ENCODE measurements at regions of chr3 and their contacts with region 1.

Region 1: DNA sequence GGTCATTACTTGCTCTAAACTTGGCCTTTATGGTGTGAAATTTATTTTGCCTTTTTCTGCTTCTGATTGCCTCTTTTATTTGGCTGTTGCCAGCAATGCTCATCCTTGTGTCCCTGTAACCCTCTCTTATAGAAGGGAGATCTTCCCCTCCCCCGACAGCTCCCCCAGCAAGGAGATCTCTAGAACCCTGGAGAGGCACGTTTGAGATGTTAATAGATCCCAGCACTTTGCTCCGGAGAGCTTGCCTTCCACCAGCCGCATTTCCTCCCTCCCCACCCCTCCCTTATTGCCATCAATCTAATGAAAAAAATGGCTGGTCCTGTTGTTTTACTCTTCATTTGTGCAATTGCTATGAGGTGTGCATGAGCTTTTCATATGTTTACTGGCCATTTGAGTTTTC is 18.2 kb downstream of the TRIM71 start:
- DNase-seq: no peak
- ATAC-seq: no peak
- H3K4me3 ChIP-seq: no peak overlapping the region
- H3K4me3 Mint-ChIP-seq: no peak overlapping the region
- H3K27ac ChIP-seq: no peak overlapping the region
- H3K27ac Mint-ChIP-seq: no peak overlapping the region
- H3K4me1 ChIP-seq: no peaks in the 10 kb centered on the region
- H3K4me1 Mint-ChIP-seq: no peaks in the 10 kb centered on the region
- H3K27me3 ChIP-seq: peaks cover 0 to 15% of the 10 kb centered on the region in 2 experiments
- H3K27me3 Mint-ChIP-seq: peaks cover 18 to 30% of the 10 kb centered on the region in 2 donors

Region 2: GRCh38 chr3:32484436-32484835 is 351.5 kb before region 1 on chr3:
- CTCF ChIA-PET with region 1: no interaction called
- POLR2A ChIA-PET with region 1: no interaction called
- DNase-seq: no peak
- ATAC-seq: no peak
- H3K4me3 ChIP-seq: no peak overlapping the region
- H3K4me3 Mint-ChIP-seq: peak overlapping the region in 1 of 3 donors; percentile 10
- H3K27ac ChIP-seq: no peak overlapping the region
- H3K27ac Mint-ChIP-seq: peak overlapping the region; percentile 11 to 69
- H3K4me1 ChIP-seq: peaks cover 0 to 6% of the 10 kb centered on the region in 2 experiments
- H3K4me1 Mint-ChIP-seq: peaks cover 20 to 37% (median 34%) of the 10 kb centered on the region in 3 donors
- H3K27me3 ChIP-seq: no peaks in the 10 kb centered on the region
- H3K27me3 Mint-ChIP-seq: no peaks in the 10 kb centered on the region

Region 3: DNA sequence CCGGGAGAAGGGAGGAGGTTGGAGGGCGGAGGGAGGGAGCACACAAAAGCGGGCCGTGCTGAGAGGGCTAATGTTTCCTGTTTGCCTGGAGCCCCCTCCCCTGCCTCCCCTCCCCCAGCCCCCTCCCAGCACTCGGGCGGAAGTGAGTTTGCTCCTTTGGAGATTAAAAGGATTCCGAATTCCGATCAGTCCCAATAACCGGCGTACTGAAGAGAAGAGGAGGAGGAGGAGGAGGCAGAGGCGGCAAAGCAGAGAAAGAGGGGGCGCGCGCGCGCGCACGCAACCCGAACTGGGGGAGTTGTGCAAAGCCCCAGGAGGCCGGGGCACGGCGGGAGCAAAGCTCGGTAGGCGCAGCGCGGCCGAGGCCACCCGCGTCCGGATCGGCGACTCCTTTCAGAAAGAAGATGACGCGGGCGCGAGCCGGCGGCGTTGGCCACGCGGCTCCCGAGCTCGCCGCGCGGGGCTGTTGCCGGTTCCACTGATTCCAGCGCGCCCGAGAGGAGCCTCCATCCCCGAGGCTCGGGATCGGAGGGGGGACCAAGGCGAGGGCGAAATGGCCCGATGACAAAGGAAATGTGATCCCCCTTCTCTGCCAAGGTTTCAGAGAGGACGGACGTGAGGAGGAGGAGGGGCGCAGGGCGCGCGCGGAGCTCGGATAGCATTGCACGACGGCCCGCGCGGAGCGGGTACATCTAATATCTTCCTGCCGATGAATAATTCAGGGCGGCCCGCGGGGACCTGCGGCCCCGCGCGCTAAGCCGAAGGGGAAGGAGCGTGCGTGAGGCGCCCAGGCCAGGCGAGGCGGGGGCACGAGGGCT is 19.3 kb before region 1 on chr3:
- CTCF ChIA-PET with region 1: no interaction called
- POLR2A ChIA-PET with region 1: interaction called in 1 of 2 experiments, 13 read pairs
- DNase-seq: peak in 2 of 35 experiments; percentile 7 to 10
- ATAC-seq: no peak
- H3K4me3 ChIP-seq: peak overlapping the region in 1 of 2 donors; percentile 88
- H3K4me3 Mint-ChIP-seq: peak overlapping the region; percentile 53 to 74 (median 62)
- H3K27ac ChIP-seq: no peak overlapping the region
- H3K27ac Mint-ChIP-seq: no peak overlapping the region
- H3K4me1 ChIP-seq: peaks cover 8 to 18% of the 10 kb centered on the region in 2 experiments
- H3K4me1 Mint-ChIP-seq: peaks cover 6 to 30% (median 22%) of the 10 kb centered on the region in 3 donors
- H3K27me3 ChIP-seq: peaks cover 0 to 35% of the 10 kb centered on the region in 2 experiments
- H3K27me3 Mint-ChIP-seq: peaks cover 16 to 52% of the 10 kb centered on the region in 2 donors

Region 4: GRCh38 chr3:32913790-32914446 is 78.0 kb after region 1 on chr3:
- CTCF ChIA-PET with region 1: interaction called in 1 of 2 experiments, 12 read pairs
- POLR2A ChIA-PET with region 1: no interaction called
- DNase-seq: no peak
- ATAC-seq: no peak
- H3K4me3 ChIP-seq: no peak overlapping the region
- H3K4me3 Mint-ChIP-seq: no peak overlapping the region
- H3K27ac ChIP-seq: no peak overlapping the region
- H3K27ac Mint-ChIP-seq: no peak overlapping the region
- H3K4me1 ChIP-seq: no peaks in the 10 kb centered on the region
- H3K4me1 Mint-ChIP-seq: peaks cover 0 to 9% (median 8%) of the 10 kb centered on the region in 3 donors
- H3K27me3 ChIP-seq: no peaks in the 10 kb centered on the region
- H3K27me3 Mint-ChIP-seq: no peaks in the 10 kb centered on the region

Measured in T-cell (primary cell).